ENCODE measurements at regions of chr2 and their contacts with region 1.

Region 1: GRCh38 chr2:74002487-74003391 is 18.0 kb downstream of the TET3 start:
- DNase-seq: peak; percentile 83 to 90 (median 87)
- H3K4me3 ChIP-seq: peak overlapping the region; percentile 66
- H3K27ac ChIP-seq: peak overlapping the region in 1 of 2 donors; percentile 47
- H3K4me1 ChIP-seq: peaks cover 36% of the 10 kb centered on the region
- H3K27me3 ChIP-seq: no peaks in the 10 kb centered on the region
- CTCF ChIP-seq: peak in 1 of 3 donors; percentile 19
- EP300 ChIP-seq: no peak
- POLR2A ChIP-seq: peak; percentile 82

Region 2: DNA sequence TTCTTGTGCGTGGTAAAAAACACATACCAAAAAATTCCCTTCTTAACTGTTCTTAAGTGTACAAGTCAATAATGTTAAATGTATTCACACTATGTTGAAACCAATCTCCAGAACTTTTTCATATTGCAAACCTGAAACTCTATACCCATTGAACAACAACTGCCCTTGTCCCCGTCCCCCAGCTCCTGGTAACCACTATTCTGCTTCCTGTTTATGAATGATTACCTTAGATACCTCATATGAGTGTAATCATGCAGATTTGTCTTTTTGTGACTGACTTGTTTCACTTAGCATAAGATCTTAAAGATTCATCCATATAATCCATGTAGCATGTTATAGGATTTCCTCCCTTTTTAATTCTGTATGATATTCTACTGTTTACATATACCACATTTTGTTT is 420.4 kb before region 1 on chr2:
- intact Hi-C with region 1: no loop called
- DNase-seq: no peak
- H3K4me3 ChIP-seq: no peak overlapping the region
- H3K27ac ChIP-seq: no peak overlapping the region
- H3K4me1 ChIP-seq: no peaks in the 10 kb centered on the region
- H3K27me3 ChIP-seq: no peaks in the 10 kb centered on the region
- CTCF ChIP-seq: no peak
- EP300 ChIP-seq: no peak
- POLR2A ChIP-seq: no peak

Region 3: DNA sequence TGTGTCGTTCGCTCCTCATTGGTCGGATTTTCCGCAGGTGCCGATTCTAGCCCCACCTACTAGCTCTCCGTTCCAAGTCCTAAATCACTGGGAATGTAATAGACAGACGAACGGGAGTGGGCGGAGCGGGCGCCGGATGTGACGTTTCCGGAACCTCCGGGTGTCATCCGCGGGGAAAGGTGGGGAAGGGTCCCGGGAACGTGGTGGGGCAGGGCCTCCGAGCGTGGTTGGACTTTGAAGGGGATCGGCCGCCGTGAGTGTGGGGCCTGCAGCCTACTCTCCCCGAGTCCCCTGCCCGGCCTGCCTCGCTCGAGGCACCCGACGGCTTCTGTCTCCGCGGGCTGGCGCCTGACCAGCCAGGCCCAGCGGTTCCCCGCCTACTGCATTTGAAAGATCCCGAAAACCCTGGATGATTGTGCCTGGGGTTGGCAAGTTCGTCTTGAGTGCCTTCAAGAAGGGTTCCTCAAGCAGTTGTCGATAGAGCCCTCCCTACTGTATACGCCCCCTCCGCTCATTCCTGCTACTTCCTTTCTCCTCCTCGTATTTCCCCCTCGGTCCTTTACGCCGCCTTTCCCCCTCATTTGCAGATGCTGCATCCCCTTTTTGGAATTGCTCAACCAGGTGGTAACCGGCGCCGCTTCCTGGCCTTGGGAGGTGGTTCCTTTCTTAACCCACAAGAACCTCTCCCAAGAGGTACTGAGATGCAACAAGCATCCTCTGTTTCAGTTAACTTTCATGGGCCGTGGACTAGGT is 173.7 kb before region 1 on chr2 and contains the start of gene STAMBP:
- intact Hi-C with region 1: loop called in 1 of 4 experiments (anchors 10 kb)
- DNase-seq: peak; percentile 96 to 98 (median 97)
- H3K4me3 ChIP-seq: peak within 1 kb of the TSS; percentile 83
- H3K27ac ChIP-seq: peak within 1 kb of the TSS; percentile 56 to 96
- H3K4me1 ChIP-seq: peaks cover 9% of the 10 kb centered on the region
- H3K27me3 ChIP-seq: no peaks in the 10 kb centered on the region
- CTCF ChIP-seq: peak in 1 of 3 donors; percentile 11
- EP300 ChIP-seq: no peak
- POLR2A ChIP-seq: peak; percentile 83
- total RNA-seq, gene STAMBP: 17.0 to 34.2 (median 28.1) TPM

Region 4: GRCh38 chr2:73926493-73927338 is 76.0 kb before region 1 on chr2 and contains the start of gene DGUOK:
- intact Hi-C with region 1: loop called in 1 of 4 experiments (anchors 5 kb)
- DNase-seq: peak; percentile 96 to 99 (median 97)
- H3K4me3 ChIP-seq: peak within 1 kb of the TSS; percentile 61
- H3K27ac ChIP-seq: peak within 1 kb of the TSS; percentile 83 to 94
- H3K4me1 ChIP-seq: peaks cover 3% of the 10 kb centered on the region
- H3K27me3 ChIP-seq: no peaks in the 10 kb centered on the region
- CTCF ChIP-seq: peak in 1 of 3 donors; percentile 4
- EP300 ChIP-seq: peak; percentile 68
- POLR2A ChIP-seq: peak; percentile 97
- total RNA-seq, gene DGUOK: 45.8 to 66.2 (median 52.4) TPM

Region 5: DNA sequence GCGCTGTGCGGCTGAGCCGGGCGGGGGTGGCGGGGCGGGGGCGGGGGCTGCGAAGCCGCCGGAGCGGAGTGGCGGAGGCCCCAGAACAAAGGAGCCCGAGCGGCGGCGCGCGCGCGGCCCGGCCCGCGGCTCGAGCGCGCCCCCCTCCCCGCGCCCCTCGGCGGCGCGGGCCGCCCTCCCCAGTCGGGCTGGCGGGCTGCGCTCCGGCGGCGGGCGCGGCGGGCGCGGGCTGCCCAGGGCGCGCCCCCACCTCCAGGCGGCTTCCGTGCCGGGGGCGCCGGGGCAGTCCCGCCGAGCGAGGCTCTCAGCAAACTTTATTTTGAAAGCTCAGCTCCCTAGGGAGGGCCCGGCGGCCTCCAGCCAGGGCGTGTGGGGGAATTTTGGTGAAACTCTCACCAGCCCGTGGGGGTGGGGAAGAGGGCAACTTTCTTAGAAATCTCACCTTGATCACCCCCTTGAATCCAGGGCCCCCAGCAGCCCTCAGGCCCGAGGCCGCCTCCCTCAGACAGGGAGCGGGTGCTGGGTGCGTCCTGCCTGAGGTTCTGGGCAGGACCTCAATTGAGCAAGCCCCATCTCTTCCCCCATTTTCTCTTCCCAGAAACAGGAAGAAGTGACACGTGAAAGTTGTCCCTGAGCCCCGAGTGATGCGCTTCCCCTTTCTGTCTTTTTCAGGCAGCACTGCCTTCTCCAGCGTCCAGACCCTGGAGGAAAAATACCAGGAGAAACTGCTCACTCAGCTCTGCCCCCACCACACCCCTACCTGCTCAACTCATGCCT is 17.2 kb before region 1 on chr2:
- intact Hi-C with region 1: loop called in 1 of 4 experiments (anchors 2 kb)
- DNase-seq: peak in 4 of 5 donors; percentile 50 to 75 (median 70)
- H3K4me3 ChIP-seq: peak overlapping the region; percentile 51
- H3K27ac ChIP-seq: peak overlapping the region in 1 of 2 donors; percentile 40
- H3K4me1 ChIP-seq: peaks cover 16% of the 10 kb centered on the region
- H3K27me3 ChIP-seq: no peaks in the 10 kb centered on the region
- CTCF ChIP-seq: no peak
- EP300 ChIP-seq: no peak
- POLR2A ChIP-seq: no peak